Right ventricle myocardium inferior (tissue), 1 donor: ENCODE measurements at regions of chr11 and their contacts with region 1.

Region 1: DNA sequence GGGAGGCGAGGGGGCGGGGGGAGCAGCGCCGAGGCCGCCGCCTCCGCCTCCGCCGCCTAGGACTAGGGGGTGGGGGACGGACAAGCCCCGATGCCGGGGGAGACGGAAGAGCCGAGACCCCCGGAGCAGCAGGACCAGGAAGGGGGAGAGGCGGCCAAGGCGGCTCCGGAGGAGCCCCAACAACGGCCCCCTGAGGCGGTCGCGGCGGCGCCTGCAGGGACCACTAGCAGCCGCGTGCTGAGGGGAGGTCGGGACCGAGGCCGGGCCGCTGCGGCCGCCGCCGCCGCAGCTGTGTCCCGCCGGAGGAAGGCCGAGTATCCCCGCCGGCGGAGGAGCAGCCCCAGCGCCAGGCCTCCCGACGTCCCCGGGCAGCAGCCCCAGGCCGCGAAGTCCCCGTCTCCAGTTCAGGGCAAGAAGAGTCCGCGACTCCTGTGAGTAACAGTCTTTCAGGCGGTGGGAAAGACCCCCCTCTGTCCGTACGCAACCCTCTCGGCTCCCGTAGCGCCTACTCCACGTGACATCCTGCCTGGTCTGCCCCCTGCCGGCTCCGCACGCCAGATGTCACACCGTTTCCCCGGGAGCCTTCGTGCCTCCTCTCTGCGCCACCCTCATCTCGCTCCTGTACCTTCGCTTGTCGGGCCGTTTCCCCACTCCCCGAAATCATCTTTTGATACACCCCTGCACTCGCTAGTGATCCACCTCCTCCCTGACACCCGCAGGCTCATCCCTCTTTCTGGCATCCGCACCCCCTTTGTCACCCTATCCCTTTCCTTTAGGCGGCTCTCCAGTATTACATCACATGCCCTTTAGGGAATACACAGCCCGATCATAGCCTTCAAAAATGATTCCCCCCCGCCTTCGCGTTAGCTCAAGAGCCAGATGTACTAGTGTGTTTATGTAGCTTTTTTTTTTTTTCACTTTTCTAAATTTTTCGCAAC is 598 bp downstream of the ZFP91 start:
- DNase-seq: peak; percentile 95
- ATAC-seq: peak; percentile 74

Region 2: DNA sequence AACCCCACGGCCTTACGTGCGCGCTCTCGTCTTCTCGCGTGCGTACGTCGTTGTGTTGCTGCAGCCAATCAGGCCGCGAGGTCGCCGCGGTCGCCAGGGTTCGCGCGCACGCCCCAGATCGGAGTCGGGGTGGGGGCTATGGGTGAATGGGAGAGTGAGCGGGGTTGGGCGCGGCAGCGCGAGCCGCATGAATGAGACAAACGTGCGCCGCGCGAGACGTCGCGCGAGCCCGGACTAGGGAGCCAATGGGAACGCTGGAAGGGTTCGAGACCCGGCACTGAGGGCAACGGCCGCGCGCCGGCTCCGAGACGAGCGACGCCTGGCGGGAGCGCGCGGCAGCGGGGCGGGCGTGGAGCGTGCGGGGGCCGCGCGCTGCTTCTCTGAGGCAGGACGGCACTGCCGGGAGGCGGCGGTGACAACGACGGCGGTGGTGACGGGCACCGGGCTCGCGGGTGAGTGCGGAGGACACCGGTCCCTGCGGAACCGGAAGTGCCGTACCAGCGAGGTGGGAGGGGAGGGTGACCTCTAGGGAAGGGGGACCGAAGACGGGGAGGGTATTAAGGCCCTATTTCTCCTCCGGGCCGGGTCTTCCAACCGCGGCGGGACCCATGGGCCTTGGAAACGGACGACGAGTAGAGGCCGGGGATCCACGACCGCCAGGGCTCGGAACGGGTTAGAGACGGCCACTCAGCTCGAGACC is 911.6 kb before region 1 on chr11 and contains the start of gene ZDHHC5:
- intact Hi-C with region 1: loop called (anchors 1 kb)
- DNase-seq: peak; percentile 100
- ATAC-seq: peak; percentile 96
- total RNA-seq, gene ZDHHC5: 44.9 TPM

Region 3: GRCh38 chr11:57712256-57713150 is 867.0 kb before region 1 on chr11 and contains the start of gene TMX2:
- intact Hi-C with region 1: loop called (anchors 5 kb)
- DNase-seq: peak; percentile 95
- ATAC-seq: peak; percentile 97
- total RNA-seq, gene TMX2: 56.9 TPM

Region 4: DNA sequence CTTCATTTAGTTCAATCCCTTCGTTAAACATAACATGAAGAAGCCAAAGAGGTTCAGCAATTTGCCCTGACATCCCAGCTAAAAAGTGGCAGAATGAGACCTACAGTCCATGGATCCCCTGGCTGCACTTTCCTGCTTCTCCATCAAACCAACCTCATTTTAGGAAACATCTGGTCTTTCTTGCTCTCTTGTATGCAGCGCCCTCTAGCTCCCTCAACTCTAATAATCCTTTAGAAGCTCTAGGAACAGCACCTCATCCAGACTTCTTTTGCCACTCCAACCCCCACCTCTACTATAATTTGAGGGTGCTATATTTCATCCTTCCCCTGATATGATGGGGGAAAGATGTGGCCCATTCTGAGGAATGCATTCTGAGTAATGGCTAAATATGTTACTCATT is 50.4 kb after region 1 on chr11:
- intact Hi-C with region 1: loop called (anchors 5 kb)
- DNase-seq: no peak
- ATAC-seq: peak; percentile 37

Region 5: GRCh38 chr11:58654908-58655296 is 75.4 kb after region 1 on chr11:
- intact Hi-C with region 1: loop called (anchors 1 kb)
- DNase-seq: no peak
- ATAC-seq: no peak

Region 6: DNA sequence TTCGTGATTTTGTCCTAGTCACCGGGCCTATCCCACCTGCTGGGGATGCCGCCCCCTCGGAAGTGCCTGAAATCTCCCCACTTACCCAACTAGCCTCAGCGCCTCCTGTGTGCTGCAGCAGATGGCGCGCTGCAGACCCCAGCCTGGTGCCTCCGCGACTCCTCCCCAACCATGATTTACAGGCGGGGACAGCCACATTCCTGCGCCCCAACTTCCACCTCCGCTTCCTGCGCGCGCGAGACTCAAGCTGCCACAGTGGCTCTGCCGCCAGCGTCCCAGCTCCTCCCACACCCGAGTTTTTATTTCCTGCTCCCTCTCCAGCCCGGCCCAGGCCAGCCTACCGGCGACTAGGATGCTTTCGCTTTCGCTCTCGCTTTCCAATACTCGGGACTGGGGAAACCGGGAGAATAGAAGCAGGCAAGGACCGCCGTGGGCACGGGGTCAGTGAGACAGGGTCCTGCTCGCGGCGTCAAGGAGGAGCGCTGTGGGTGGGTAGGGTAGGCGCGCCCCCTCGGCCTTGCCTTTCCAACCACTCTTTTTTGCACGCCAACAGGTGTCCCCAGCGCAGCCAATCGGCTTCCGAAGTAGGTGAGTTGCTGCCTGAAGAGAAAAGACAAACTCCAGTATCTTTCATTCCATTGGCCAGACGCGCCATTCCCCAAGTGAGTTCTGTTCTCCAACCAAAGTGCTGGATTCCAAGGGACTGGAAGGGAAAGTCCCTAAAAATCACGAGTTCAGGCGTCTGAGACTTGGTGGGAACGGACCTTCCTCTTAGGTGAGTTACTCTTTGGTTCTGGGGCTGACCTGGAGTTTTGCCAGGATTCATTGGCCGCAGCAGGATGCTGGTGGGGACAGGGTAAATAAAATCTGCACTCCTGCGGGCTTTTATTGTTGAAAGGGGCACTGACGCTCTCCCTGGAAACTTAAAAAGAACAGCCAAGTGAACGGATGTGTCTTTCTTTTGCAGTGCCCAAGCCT is 563.4 kb after region 1 on chr11 and contains the start of gene FAM111A:
- intact Hi-C with region 1: loop called (anchors 5 kb)
- DNase-seq: peak; percentile 95
- ATAC-seq: peak; percentile 94
- total RNA-seq, gene FAM111A: 12.0 TPM